Caco-2 (cell line): ENCODE measurements at regions of chr10 and their contacts with region 1.

Region 1: DNA sequence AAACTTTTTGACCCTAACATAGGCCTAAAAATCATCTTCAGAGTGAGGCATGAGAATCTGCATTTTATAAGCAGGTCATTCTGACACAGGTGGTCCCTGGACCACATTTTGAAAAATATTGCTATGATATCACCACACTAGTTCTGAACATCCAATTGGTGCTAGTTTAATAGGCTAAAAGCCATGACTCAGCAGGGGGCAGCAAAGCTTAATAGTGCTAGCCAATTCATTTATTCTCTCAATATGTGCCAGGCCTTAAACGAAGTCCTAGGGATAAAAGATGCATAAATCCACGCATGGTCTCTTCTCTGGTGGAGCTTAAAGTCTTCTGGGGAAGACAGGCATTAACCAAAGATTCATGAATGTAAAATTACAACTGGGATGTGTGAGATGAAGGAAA is 10.2 kb upstream of the SLC25A28 start:
- DNase-seq: peak; percentile 58 to 74
- H3K4me3 ChIP-seq: no peak overlapping the region
- H3K4me3 Mint-ChIP-seq: no peak overlapping the region
- H3K27ac Mint-ChIP-seq: no peak overlapping the region
- H3K4me1 ChIP-seq: peaks cover 3% of the 10 kb centered on the region; the same call in 1 of the 2 replicates
- H3K4me1 Mint-ChIP-seq: peaks cover 8% of the 10 kb centered on the region
- H3K27me3 ChIP-seq: no peaks in the 10 kb centered on the region
- H3K27me3 Mint-ChIP-seq: no peaks in the 10 kb centered on the region
- CTCF ChIP-seq: peak; percentile 72 to 80

Region 2: GRCh38 chr10:99659031-99659867 is 28.8 kb after region 1 on chr10 and contains the start of gene ENTPD7:
- CTCF ChIA-PET with region 1: interaction called, 12 read pairs
- POLR2A ChIA-PET with region 1: no interaction called
- intact Hi-C with region 1: loop called (anchors 1 kb)
- DNase-seq: peak; percentile 97 to 98
- H3K4me3 ChIP-seq: peak within 1 kb of the TSS; percentile 94
- H3K4me3 Mint-ChIP-seq: peak within 1 kb of the TSS; percentile 79
- H3K27ac Mint-ChIP-seq: peak within 1 kb of the TSS; percentile 69
- H3K4me1 ChIP-seq: peaks cover 19% of the 10 kb centered on the region
- H3K4me1 Mint-ChIP-seq: peaks cover 24% of the 10 kb centered on the region
- H3K27me3 ChIP-seq: no peaks in the 10 kb centered on the region
- H3K27me3 Mint-ChIP-seq: no peaks in the 10 kb centered on the region
- CTCF ChIP-seq: peak; percentile 21 to 38
- total RNA-seq, gene ENTPD7: 35.5 and 36.0 TPM in 2 replicates

Region 3: GRCh38 chr10:99682752-99683151 is 52.3 kb after region 1 on chr10:
- CTCF ChIA-PET with region 1: interaction called, 5 read pairs
- POLR2A ChIA-PET with region 1: no interaction called
- intact Hi-C with region 1: loop called (anchors 1 kb)
- DNase-seq: peak in 1 of 2 experiments; percentile 38
- H3K4me3 ChIP-seq: no peak overlapping the region
- H3K4me3 Mint-ChIP-seq: no peak overlapping the region
- H3K27ac Mint-ChIP-seq: no peak overlapping the region
- H3K4me1 ChIP-seq: no peaks in the 10 kb centered on the region; the same call in 1 of the 2 replicates
- H3K4me1 Mint-ChIP-seq: peaks cover 6% of the 10 kb centered on the region
- H3K27me3 ChIP-seq: no peaks in the 10 kb centered on the region
- H3K27me3 Mint-ChIP-seq: no peaks in the 10 kb centered on the region
- CTCF ChIP-seq: peak; percentile 51 to 52

Region 4: DNA sequence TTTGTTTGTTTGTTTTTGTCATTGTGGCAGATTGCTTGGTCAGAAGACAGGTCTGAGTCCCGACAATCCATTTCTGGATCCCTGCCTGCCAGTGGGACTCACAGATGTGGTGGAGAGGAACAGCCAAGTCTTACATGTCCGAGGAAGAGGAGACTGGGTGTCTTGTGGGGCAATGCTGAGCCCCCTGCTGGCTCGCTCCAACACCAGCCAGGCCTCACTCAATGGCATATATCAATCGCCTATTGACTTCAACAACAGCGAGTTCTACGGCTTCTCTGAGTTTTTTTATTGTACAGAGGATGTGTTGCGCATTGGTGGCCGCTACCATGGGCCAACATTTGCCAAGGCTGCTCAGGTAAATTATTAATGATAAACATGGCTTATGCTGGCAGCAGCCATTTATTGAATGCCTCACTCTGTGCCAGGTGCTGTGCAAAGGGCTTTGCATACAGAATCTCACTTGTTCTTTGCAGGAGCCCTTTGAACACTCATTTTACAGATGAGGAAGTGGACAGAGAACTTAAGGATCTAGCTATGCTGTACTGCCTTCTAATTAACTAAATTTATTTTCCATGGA is 68.2 kb after region 1 on chr10:
- CTCF ChIA-PET with region 1: interaction called, 3 read pairs
- POLR2A ChIA-PET with region 1: no interaction called
- intact Hi-C with region 1: loop called (anchors 1 kb)
- DNase-seq: peak in 1 of 2 experiments; percentile 43
- H3K4me3 ChIP-seq: no peak overlapping the region
- H3K4me3 Mint-ChIP-seq: no peak overlapping the region
- H3K27ac Mint-ChIP-seq: no peak overlapping the region
- H3K4me1 ChIP-seq: no peaks in the 10 kb centered on the region
- H3K4me1 Mint-ChIP-seq: peaks cover 4% of the 10 kb centered on the region
- H3K27me3 ChIP-seq: no peaks in the 10 kb centered on the region
- H3K27me3 Mint-ChIP-seq: no peaks in the 10 kb centered on the region
- CTCF ChIP-seq: peak; percentile 14 to 61

Region 5: GRCh38 chr10:99711129-99711719 is 80.8 kb after region 1 on chr10:
- CTCF ChIA-PET with region 1: interaction called, 8 read pairs
- POLR2A ChIA-PET with region 1: no interaction called
- intact Hi-C with region 1: loop called (anchors 1 kb)
- DNase-seq: peak in 1 of 2 experiments; percentile 65
- H3K4me3 ChIP-seq: no peak overlapping the region
- H3K4me3 Mint-ChIP-seq: no peak overlapping the region
- H3K27ac Mint-ChIP-seq: no peak overlapping the region
- H3K4me1 ChIP-seq: no peaks in the 10 kb centered on the region
- H3K4me1 Mint-ChIP-seq: peaks cover 8% of the 10 kb centered on the region
- H3K27me3 ChIP-seq: no peaks in the 10 kb centered on the region
- H3K27me3 Mint-ChIP-seq: no peaks in the 10 kb centered on the region
- CTCF ChIP-seq: peak; percentile 41 to 73

Region 6: DNA sequence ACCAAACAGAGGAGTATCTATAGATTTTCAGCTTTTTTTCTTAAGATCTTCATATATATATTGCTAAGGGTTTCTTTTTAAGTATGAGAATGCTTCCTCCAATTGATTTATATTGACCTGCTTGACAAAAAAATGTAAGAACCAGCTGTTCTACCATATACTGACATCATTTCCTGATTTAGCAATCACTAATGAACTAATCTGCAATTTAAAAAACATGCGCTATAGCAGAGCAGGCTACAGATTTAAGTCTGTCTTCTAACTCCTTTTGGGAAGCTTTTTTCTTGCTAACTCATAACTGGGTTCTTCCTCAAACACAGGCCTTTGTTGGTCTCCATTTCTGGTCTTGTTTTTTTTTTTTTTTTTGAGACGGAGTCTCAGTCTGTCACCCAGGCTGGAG is 185.2 kb after region 1 on chr10:
- CTCF ChIA-PET with region 1: no interaction called
- POLR2A ChIA-PET with region 1: no interaction called
- intact Hi-C with region 1: no loop called
- DNase-seq: no peak
- H3K4me3 ChIP-seq: no peak overlapping the region
- H3K4me3 Mint-ChIP-seq: no peak overlapping the region
- H3K27ac Mint-ChIP-seq: no peak overlapping the region
- H3K4me1 ChIP-seq: no peaks in the 10 kb centered on the region
- H3K4me1 Mint-ChIP-seq: no peaks in the 10 kb centered on the region
- H3K27me3 ChIP-seq: no peaks in the 10 kb centered on the region
- H3K27me3 Mint-ChIP-seq: no peaks in the 10 kb centered on the region
- CTCF ChIP-seq: no peak